Activated CD4-positive, alpha-beta T cell treated with anti-CD3 and anti-CD28 coated beads for 36 hours (primary cell): ENCODE measurements at regions of chr2 and their contacts with region 1.

Region 1: GRCh38 chr2:75640621-75641121 is 5.9 kb upstream of the MRPL19 start:
- DNase-seq: peak; percentile 78
- ATAC-seq: peak; percentile 100
- H3K4me3 Mint-ChIP-seq: no peak overlapping the region
- H3K27ac Mint-ChIP-seq: no peak overlapping the region
- H3K4me1 Mint-ChIP-seq: peaks cover 6% of the 10 kb centered on the region
- H3K27me3 Mint-ChIP-seq: peaks cover 11% of the 10 kb centered on the region

Region 2: GRCh38 chr2:75180476-75180875 is 460.2 kb before region 1 on chr2:
- CTCF ChIA-PET with region 1: no interaction called
- POLR2A ChIA-PET with region 1: no interaction called
- intact Hi-C with region 1: no loop called
- DNase-seq: no peak
- ATAC-seq: no peak
- H3K4me3 Mint-ChIP-seq: no peak overlapping the region
- H3K27ac Mint-ChIP-seq: no peak overlapping the region
- H3K4me1 Mint-ChIP-seq: no peaks in the 10 kb centered on the region
- H3K27me3 Mint-ChIP-seq: peaks cover 6% of the 10 kb centered on the region

Region 3: DNA sequence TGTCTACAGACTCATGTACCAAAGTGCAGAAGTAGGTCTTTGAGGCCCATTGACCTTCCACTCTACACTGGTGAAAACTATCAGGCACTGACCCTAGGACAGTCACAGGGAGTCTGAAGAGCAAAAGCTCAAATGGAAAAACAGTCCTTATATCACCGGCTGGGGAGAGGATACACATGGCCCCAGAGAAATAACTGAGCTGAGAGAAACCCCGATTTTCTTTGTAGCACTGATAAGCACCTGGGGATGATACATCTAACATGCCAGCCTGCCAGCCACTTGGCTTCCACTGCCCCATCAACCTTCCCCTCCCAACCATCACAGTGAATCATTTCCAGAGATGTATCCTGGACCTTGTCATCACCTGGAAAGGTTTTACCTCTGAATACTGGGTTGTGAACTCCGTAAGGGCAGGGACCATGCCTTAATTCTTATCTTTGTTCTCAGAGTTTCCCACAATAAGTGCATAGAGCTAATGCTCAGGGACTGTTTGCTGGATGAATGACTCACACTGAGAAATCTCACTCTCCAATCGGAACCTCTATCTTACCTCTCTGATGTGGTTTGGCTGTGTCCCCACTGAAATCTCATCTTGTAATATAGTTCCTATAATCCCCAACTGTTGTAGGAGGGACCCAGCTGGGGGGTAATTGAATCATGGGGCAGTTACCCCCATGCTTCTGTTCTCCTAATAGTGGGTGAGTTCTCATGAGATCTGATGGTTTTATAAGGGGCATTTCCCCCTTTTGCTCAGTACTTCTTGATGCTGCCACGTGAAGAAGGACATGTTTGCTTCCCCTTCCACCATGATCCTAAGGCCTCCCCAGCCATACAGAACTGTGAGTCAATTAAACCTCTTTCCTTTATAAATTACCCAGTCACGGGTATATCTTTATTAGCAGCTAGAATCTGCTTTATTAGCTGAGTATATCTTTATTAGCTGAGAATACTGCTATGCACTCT is 117.1 kb before region 1 on chr2:
- CTCF ChIA-PET with region 1: no interaction called
- POLR2A ChIA-PET with region 1: no interaction called
- intact Hi-C with region 1: no loop called
- DNase-seq: peak; percentile 16
- ATAC-seq: peak; percentile 67
- H3K4me3 Mint-ChIP-seq: no peak overlapping the region
- H3K27ac Mint-ChIP-seq: no peak overlapping the region
- H3K4me1 Mint-ChIP-seq: no peaks in the 10 kb centered on the region
- H3K27me3 Mint-ChIP-seq: peaks cover 28% of the 10 kb centered on the region

Region 4: DNA sequence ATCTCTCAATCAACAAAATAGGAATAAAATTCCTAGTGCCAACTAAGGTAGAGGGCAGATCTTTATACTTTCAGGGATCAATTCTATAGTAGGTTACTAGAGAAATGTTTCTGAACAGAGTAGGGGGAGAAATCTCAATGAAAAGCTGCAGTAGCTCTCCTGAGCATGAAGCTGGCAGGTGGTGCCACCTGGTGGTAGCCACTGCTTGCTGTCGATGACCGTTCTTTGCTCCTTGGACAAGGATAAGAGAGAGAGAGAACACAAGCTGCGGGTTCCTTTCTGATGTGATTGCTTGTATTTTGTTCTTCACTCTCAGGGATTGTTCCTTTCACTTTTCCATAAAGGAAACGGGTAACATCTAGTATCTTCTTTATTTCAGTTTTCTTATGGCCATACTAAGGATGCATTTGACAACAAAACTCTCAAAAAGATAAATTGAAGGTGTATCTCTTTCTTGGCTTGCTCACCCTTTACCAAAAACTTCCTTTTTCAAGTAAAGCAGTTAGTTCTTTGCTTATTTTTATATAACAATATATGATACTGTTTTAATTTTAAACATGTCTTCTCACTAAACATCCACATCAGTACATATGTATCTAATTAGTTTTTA is 12.7 kb before region 1 on chr2:
- CTCF ChIA-PET with region 1: interaction called, 13 read pairs
- POLR2A ChIA-PET with region 1: no interaction called
- intact Hi-C with region 1: no loop called
- DNase-seq: peak; percentile 81
- ATAC-seq: peak; percentile 83
- H3K4me3 Mint-ChIP-seq: no peak overlapping the region
- H3K27ac Mint-ChIP-seq: no peak overlapping the region
- H3K4me1 Mint-ChIP-seq: no peaks in the 10 kb centered on the region
- H3K27me3 Mint-ChIP-seq: peaks cover 22% of the 10 kb centered on the region

Region 5: DNA sequence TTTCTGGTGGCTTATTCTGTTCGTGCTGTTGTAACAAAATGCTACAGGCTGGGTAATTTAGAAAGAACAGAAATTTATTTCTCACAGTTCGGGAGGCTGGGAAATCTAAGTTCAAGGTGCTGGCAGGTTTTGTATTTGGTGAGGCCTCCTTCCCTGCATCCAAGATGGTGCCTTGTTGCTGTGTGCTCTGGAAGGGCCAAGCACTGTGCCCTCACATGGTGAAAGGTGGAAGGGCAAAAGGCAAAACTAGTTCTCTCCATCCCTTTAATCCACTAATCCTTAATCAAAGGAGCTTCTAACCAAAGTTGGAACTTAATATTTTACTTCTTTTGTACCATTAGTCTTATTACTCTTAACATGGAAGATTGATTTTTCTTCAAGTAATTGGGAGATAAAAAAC is 13.3 kb after region 1 on chr2:
- CTCF ChIA-PET with region 1: interaction called, 16 read pairs
- POLR2A ChIA-PET with region 1: no interaction called
- intact Hi-C with region 1: no loop called
- DNase-seq: no peak
- ATAC-seq: no peak
- H3K4me3 Mint-ChIP-seq: no peak overlapping the region
- H3K27ac Mint-ChIP-seq: no peak overlapping the region
- H3K4me1 Mint-ChIP-seq: peaks cover 28% of the 10 kb centered on the region
- H3K27me3 Mint-ChIP-seq: no peaks in the 10 kb centered on the region

Region 6: GRCh38 chr2:75676464-75676863 is 35.8 kb after region 1 on chr2:
- CTCF ChIA-PET with region 1: interaction called, 20 read pairs
- POLR2A ChIA-PET with region 1: no interaction called
- intact Hi-C with region 1: loop called (anchors 1 kb)
- DNase-seq: no peak
- ATAC-seq: no peak
- H3K4me3 Mint-ChIP-seq: no peak overlapping the region
- H3K27ac Mint-ChIP-seq: no peak overlapping the region
- H3K4me1 Mint-ChIP-seq: peaks cover 11% of the 10 kb centered on the region
- H3K27me3 Mint-ChIP-seq: no peaks in the 10 kb centered on the region

Region 7: GRCh38 chr2:76599732-76600368 is 959.2 kb after region 1 on chr2:
- CTCF ChIA-PET with region 1: no interaction called
- POLR2A ChIA-PET with region 1: no interaction called
- intact Hi-C with region 1: loop called in 1 of 2 experiments (anchors 5 kb)
- DNase-seq: peak; percentile 20
- ATAC-seq: peak; percentile 42
- H3K4me3 Mint-ChIP-seq: no peak overlapping the region
- H3K27ac Mint-ChIP-seq: no peak overlapping the region
- H3K4me1 Mint-ChIP-seq: no peaks in the 10 kb centered on the region
- H3K27me3 Mint-ChIP-seq: no peaks in the 10 kb centered on the region